Mammary epithelial cell (primary cell): ENCODE measurements at regions of chr7 and their contacts with region 1.

Region 1: GRCh38 chr7:4195660-4196059 is 486.4 kb upstream of the FOXK1 start:
- DNase-seq: no peak
- H3K4me3 ChIP-seq: no peak overlapping the region
- H3K27ac ChIP-seq: no peak overlapping the region
- H3K4me1 ChIP-seq: no peaks in the 10 kb centered on the region
- H3K27me3 ChIP-seq: no peaks in the 10 kb centered on the region
- CTCF ChIP-seq: no peak

Region 2: GRCh38 chr7:4091767-4092166 is 103.9 kb before region 1 on chr7:
- CTCF ChIA-PET with region 1: no interaction called
- dilution Hi-C with region 1: loop called (anchors 5 kb)
- in situ Hi-C with region 1: no loop called
- intact Hi-C with region 1: no loop called
- DNase-seq: peak; percentile 46
- H3K4me3 ChIP-seq: no peak overlapping the region
- H3K27ac ChIP-seq: no peak overlapping the region
- H3K4me1 ChIP-seq: no peaks in the 10 kb centered on the region
- H3K27me3 ChIP-seq: no peaks in the 10 kb centered on the region
- CTCF ChIP-seq: no peak